ENCODE measurements at regions of chr7 and their contacts with region 1.

Region 1: GRCh38 chr7:77331938-77332695 is 84.0 kb downstream of the GSAP start:
- DNase-seq: peak; percentile 70
- ATAC-seq: peak; percentile 91
- H3K4me3 Mint-ChIP-seq: no peak overlapping the region
- H3K27ac Mint-ChIP-seq: peak overlapping the region; percentile 55
- H3K4me1 Mint-ChIP-seq: peaks cover 54% of the 10 kb centered on the region
- H3K27me3 Mint-ChIP-seq: no peaks in the 10 kb centered on the region

Region 2: GRCh38 chr7:77252506-77252905 is 79.6 kb before region 1 on chr7:
- CTCF ChIA-PET with region 1: interaction called, 67 read pairs
- POLR2A ChIA-PET with region 1: no interaction called
- DNase-seq: no peak
- ATAC-seq: no peak
- H3K4me3 Mint-ChIP-seq: no peak overlapping the region
- H3K27ac Mint-ChIP-seq: no peak overlapping the region
- H3K4me1 Mint-ChIP-seq: no peaks in the 10 kb centered on the region
- H3K27me3 Mint-ChIP-seq: no peaks in the 10 kb centered on the region

Region 3: DNA sequence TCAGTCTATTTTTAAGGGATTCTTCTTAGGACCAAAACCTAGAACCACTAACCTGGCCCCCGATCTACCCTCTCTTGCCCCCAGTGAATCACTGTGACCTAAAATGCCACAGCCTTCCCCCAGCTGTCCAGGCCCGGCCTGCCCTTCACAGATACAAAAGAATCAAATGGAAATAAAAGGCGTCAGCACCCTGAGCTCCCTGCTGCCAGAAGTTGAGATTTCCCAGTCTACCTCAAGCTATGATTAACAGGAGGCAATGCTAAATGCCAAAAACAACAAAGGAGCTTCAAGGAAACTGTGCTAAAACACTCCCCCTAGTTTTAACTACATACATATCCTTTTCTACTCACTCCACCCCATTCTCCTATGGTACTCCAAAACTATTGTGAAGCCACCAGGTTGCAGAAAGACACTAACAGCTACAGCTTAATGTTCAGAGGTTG is 16.3 kb after region 1 on chr7:
- CTCF ChIA-PET with region 1: interaction called, 15 read pairs
- POLR2A ChIA-PET with region 1: no interaction called
- DNase-seq: no peak
- ATAC-seq: no peak
- H3K4me3 Mint-ChIP-seq: no peak overlapping the region
- H3K27ac Mint-ChIP-seq: no peak overlapping the region
- H3K4me1 Mint-ChIP-seq: peaks cover 46% of the 10 kb centered on the region
- H3K27me3 Mint-ChIP-seq: no peaks in the 10 kb centered on the region

Measured in activated CD8-positive, alpha-beta T cell treated with anti-CD3 and anti-CD28 coated beads, Interleukin-2, amount 10 ng/mL, durations not matched to agents 7 days and 5 days (primary cell).